PC-3 (cell line): ENCODE measurements at regions of chr6 and their contacts with region 1.

Region 1: GRCh38 chr6:16128759-16129622 is at the start of gene MYLIP:
- DNase-seq: peak; percentile 93
- ATAC-seq: peak; percentile 74
- H3K4me3 ChIP-seq: peak within 1 kb of the TSS; percentile 98
- H3K27ac ChIP-seq: peak within 1 kb of the TSS; percentile 84
- H3K4me1 ChIP-seq: peaks cover 36% of the 10 kb centered on the region
- H3K27me3 ChIP-seq: peaks cover 18% of the 10 kb centered on the region
- CTCF ChIP-seq: peak; percentile 61
- total RNA-seq, gene MYLIP: 12.5 and 14.1 TPM in 2 replicates

Region 2: DNA sequence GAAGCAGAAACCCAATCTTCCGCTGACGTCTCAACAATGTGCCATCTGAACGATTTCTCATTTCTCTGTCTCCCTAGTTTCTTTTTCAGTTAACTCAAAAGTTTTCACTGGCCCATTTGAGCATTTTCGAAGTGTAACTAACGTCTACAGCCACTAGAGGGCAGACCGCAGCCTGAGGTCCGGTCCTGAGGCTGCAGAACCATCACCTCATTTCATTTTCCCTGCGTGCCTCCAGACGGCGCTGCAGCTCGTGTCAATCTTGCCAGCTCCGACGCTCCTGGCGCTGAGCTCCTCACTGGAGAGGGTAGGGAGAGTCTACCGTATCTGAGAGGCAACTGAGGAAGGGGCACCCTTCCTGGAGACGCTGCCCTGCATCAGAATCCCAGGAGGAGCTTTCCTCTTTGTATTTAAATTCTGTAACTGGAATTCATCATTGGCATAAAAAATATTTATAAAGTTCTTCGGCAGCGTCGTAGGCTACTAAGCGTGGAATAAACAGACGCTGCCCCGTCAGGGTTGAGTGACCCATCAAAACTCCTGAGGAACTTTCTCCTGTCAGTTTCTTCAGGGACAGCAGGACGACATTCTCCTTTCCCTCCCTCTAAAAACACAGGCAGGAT is 437.6 kb before region 1 on chr6:
- CTCF ChIA-PET with region 1: interaction called, 4 read pairs
- POLR2A ChIA-PET with region 1: no interaction called
- intact Hi-C with region 1: loop called (anchors 5 kb)
- DNase-seq: peak; percentile 92
- ATAC-seq: peak; percentile 99
- H3K4me3 ChIP-seq: peak overlapping the region; percentile 67
- H3K27ac ChIP-seq: no peak overlapping the region
- H3K4me1 ChIP-seq: peaks cover 9% of the 10 kb centered on the region
- H3K27me3 ChIP-seq: no peaks in the 10 kb centered on the region
- CTCF ChIP-seq: peak; percentile 99

Region 3: GRCh38 chr6:15936503-15936902 is 192.5 kb before region 1 on chr6:
- CTCF ChIA-PET with region 1: no interaction called
- POLR2A ChIA-PET with region 1: no interaction called
- intact Hi-C with region 1: no loop called
- DNase-seq: no peak
- ATAC-seq: no peak
- H3K4me3 ChIP-seq: no peak overlapping the region
- H3K27ac ChIP-seq: no peak overlapping the region
- H3K4me1 ChIP-seq: no peaks in the 10 kb centered on the region
- H3K27me3 ChIP-seq: no peaks in the 10 kb centered on the region
- CTCF ChIP-seq: no peak

Region 4: DNA sequence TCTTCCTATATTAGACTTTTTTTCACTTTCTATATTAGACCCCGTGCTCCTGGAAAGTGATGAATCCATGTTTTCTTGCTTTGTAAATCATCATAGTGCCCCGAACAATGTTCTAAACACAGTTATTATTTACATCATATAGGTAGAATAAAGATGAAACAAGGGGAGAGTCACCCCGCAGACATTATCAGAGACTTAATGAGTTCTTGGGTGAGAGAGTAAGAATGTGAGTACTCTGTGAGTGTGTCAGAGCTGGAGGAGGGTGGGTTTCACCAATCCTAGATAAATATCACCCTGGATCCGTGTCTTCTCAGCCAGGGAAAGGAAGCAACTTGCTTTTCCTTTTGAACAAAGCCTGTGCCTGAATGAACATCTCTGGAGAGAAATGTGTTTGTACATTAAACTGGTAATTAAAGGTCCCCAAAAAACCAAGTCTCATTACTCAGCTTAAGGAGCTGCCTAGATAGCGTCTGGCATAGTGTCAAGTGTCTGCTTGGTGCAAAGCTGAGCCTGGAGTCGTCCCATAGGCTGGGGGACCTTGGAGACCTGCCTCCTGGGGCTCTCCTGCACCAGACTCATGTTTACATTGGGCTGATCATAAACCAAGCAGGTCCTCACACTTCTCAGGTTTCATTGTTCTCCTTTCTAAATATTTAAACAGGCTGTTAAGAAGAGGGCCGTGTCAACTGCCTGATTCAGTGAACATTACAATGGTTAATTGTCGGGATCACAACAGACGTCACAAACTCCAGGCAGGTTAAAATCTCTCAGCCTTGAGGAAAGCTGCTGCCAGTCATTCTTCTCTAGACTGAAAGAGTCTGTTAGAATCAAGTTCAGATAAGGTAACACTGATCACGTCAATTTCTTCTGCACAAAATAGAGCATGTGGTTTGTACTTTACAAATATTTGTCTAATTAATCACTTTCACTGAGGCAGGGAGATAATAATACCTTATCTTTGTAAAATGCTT is 179.8 kb before region 1 on chr6:
- CTCF ChIA-PET with region 1: interaction called, 4 read pairs
- POLR2A ChIA-PET with region 1: interaction called, 3 read pairs
- intact Hi-C with region 1: loop called (anchors 1 kb)
- DNase-seq: peak; percentile 84
- ATAC-seq: peak; percentile 89
- H3K4me3 ChIP-seq: peak overlapping the region; percentile 13; the same call in 1 of the 2 replicates
- H3K27ac ChIP-seq: peak overlapping the region; percentile 57
- H3K4me1 ChIP-seq: peaks cover 40% of the 10 kb centered on the region
- H3K27me3 ChIP-seq: no peaks in the 10 kb centered on the region
- CTCF ChIP-seq: no peak

Region 5: DNA sequence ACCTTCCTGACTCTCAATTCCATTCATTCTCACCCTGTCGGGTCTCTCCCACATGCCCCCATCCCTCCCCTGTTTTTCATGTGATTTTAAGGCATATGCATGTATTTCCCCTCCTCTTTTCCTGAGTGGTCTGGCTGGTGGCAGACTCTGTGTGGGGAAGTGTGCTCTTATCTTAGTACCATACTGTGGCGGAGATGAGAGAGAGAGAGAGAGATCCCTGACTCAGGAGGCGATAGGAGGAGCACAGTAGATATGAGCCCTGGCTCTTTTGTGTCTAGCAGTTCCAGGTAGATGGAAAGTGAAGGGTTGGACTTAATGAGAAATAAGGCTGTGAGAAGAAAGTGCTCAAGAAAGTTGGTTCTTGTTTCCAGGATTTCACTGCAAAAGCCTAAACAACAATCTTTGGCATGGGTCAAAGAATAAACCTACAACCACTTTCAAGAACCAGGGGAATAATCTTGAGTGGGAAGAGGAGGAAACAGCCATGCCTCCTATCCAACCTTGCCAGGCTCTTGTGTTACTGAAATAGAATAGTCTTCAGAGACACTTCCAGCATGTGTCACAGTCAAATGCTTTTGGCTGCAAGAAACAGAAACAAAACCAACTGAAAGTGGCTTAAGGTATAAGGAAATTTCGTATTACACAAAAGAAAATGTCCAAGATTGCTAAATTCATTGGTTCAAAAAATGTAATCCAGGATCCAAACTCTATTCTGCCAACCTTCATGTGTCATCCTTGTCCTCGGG is 123.9 kb before region 1 on chr6:
- CTCF ChIA-PET with region 1: no interaction called
- POLR2A ChIA-PET with region 1: no interaction called
- intact Hi-C with region 1: no loop called
- DNase-seq: no peak
- ATAC-seq: no peak
- H3K4me3 ChIP-seq: no peak overlapping the region
- H3K27ac ChIP-seq: no peak overlapping the region
- H3K4me1 ChIP-seq: no peaks in the 10 kb centered on the region
- H3K27me3 ChIP-seq: peaks cover 28% of the 10 kb centered on the region; the same call in 1 of the 2 replicates
- CTCF ChIP-seq: no peak

Region 6: DNA sequence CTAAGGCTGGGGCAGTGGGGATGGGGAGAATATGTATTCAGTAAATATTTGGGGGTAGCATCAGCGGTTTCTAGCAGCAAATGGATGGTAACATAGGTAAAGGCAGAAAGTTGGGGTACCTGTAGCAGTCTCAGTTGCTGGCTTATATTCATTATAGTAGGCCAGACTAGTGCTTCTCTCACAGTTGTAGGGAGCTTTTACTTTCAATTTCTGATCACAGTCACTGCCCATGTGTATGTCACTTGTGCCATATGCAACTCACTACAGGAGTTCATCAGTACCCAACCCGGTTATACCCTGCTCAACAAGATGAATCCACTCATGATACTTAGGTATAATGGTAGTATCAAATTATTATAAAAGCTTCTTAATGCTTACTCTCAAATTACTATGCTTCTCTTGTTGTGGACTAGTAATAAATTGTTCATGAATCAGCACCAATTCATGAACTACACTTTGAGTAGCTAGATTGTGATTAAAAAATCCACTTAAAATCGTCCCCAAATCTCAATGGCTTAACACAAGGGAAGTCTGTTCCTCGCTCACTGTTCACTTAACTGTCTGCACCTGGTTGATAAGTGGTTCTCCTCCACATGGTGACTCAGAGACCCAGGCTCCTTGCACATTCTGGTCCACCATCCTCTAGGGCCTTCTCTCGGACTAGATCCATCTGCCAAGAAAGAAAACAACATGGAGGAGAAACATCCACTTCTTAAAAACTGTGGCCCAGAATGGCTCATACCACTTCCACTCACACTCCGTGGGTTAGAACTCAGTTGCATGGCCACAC is 31.4 kb before region 1 on chr6:
- CTCF ChIA-PET with region 1: no interaction called
- POLR2A ChIA-PET with region 1: interaction called, 10 read pairs
- intact Hi-C with region 1: no loop called
- DNase-seq: no peak
- ATAC-seq: no peak
- H3K4me3 ChIP-seq: no peak overlapping the region
- H3K27ac ChIP-seq: no peak overlapping the region
- H3K4me1 ChIP-seq: no peaks in the 10 kb centered on the region
- H3K27me3 ChIP-seq: peaks cover 36% of the 10 kb centered on the region
- CTCF ChIP-seq: no peak

Region 7: DNA sequence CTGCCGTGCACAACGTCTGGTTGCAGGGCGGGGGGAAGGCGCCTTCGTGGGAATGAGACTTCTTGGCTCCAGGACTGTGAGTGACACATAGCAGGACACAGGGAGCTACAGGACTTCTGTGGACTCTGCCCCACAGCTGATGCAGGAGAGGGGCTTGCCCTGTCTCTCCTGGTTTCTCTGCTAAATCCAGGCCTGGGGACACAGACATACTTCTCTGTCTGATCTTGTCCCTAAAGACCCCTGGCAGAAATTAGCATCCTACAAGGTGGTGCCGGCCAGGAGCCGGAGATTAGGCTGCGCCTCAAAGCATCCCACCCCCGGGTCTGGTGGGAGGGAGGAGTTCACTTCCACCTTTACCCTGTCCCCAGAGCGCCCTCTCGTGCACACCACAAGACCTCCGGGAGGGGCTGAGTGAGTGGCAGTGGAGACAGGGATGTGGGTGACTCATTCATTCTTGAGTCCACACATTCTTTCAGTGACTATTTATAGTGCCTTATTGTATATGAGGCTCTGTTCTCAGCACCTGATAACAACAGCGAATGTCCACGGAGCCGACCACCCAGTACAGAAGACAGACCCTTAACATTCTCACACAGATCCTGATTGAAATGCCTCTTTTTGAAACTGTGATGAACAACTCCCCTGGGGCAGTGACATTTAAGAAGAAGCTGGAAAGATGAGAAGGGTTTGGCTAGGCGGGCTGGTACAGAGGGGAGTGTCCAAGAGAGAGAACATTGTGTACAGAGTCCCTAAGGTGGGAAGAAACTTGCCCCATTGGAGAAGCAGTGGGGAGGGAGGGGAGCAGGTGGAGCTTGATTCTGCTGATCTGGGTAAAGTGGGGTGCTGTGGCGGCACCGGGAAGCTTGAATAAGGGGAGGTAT is 148.3 kb after region 1 on chr6:
- CTCF ChIA-PET with region 1: no interaction called
- POLR2A ChIA-PET with region 1: no interaction called
- intact Hi-C with region 1: loop called (anchors 10 kb)
- DNase-seq: peak; percentile 96
- ATAC-seq: peak; percentile 98
- H3K4me3 ChIP-seq: peak overlapping the region; percentile 37; the same call in 1 of the 2 replicates
- H3K27ac ChIP-seq: peak overlapping the region; percentile 53
- H3K4me1 ChIP-seq: peaks cover 18% of the 10 kb centered on the region
- H3K27me3 ChIP-seq: no peaks in the 10 kb centered on the region
- CTCF ChIP-seq: peak; percentile 92